ENCODE measurements at regions of chr5 and their contacts with region 1.

Region 1: GRCh38 chr5:131634996-131635754 is at the start of gene RAPGEF6:
- DNase-seq: peak; percentile 97
- H3K4me3 Mint-ChIP-seq: peak within 1 kb of the TSS; percentile 98
- H3K27ac Mint-ChIP-seq: peak within 1 kb of the TSS; percentile 97
- H3K4me1 Mint-ChIP-seq: peaks cover 33% of the 10 kb centered on the region
- H3K27me3 Mint-ChIP-seq: no peaks in the 10 kb centered on the region
- total RNA-seq, gene RAPGEF6: 36.7 and 42.8 TPM in 2 replicates

Region 2: DNA sequence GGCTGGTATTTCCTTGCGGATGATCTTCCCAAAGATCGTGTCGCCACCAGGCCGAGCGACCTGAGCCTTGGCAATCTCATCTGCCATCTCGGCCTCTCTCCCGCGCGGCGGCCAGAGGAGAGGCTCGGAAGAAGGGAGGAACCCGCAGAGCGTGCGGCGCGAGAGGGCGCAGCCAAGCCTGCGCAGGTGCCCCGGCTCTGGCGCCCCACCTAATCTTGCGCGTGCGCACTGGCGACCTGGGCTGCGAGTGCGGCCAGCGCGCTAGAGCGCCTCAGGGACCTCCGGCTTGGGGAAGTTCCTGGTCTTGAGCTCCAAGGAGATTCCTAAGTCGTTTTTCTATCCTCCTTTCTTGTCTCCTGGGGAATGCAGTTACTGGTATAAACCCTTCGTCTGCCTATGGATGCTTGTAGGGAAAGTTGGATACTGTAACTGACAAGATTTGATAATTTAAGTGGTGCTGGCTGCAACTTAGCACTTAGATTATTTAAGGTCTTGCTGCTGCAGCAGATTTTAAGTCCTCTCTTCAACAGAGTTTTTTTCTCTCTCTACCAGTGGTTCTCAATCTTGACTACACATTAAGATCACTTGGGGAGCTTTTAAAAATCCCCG is 470.0 kb before region 1 on chr5 and contains the start of gene HINT1:
- intact Hi-C with region 1: loop called (anchors 1 kb)
- DNase-seq: peak; percentile 93
- H3K4me3 Mint-ChIP-seq: peak within 1 kb of the TSS; percentile 99
- H3K27ac Mint-ChIP-seq: peak within 1 kb of the TSS; percentile 99
- H3K4me1 Mint-ChIP-seq: peaks cover 55% of the 10 kb centered on the region
- H3K27me3 Mint-ChIP-seq: peaks cover 2% of the 10 kb centered on the region
- total RNA-seq, gene HINT1: 249 and 262 TPM in 2 replicates

Region 3: DNA sequence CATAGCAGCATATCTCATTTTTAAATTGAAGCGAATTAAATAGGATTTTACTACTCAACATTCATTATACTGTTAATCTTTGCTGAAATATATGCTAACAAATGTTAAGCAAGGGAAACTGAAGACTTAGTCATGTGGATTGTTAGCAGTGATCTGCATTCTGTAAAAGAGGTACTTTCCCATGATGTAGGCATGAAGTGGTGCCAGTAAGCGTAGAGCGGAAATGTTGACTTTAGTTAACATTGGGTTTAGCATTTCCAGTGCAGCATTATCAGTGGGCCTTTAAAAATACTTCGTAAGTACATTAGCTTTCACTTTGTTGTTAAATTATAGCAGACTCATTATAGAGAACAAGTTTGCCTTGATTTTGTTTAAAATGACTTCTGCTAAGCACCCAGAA is 241.0 kb before region 1 on chr5:
- intact Hi-C with region 1: loop called (anchors 10 kb)
- DNase-seq: peak; percentile 56
- H3K4me3 Mint-ChIP-seq: peak overlapping the region; percentile 81
- H3K27ac Mint-ChIP-seq: peak overlapping the region; percentile 95
- H3K4me1 Mint-ChIP-seq: peaks cover 84% of the 10 kb centered on the region
- H3K27me3 Mint-ChIP-seq: no peaks in the 10 kb centered on the region

Region 4: GRCh38 chr5:131671994-131672655 is 37.0 kb after region 1 on chr5:
- intact Hi-C with region 1: loop called (anchors 2 kb)
- DNase-seq: no peak
- H3K4me3 Mint-ChIP-seq: no peak overlapping the region
- H3K27ac Mint-ChIP-seq: no peak overlapping the region
- H3K4me1 Mint-ChIP-seq: peaks cover 44% of the 10 kb centered on the region
- H3K27me3 Mint-ChIP-seq: no peaks in the 10 kb centered on the region

Region 5: GRCh38 chr5:132019857-132020555 is 384.8 kb after region 1 on chr5:
- intact Hi-C with region 1: loop called (anchors 2 kb)
- DNase-seq: peak; percentile 85
- H3K4me3 Mint-ChIP-seq: peak overlapping the region; percentile 50
- H3K27ac Mint-ChIP-seq: peak overlapping the region; percentile 92
- H3K4me1 Mint-ChIP-seq: peaks cover 51% of the 10 kb centered on the region
- H3K27me3 Mint-ChIP-seq: peaks cover 48% of the 10 kb centered on the region

Region 6: DNA sequence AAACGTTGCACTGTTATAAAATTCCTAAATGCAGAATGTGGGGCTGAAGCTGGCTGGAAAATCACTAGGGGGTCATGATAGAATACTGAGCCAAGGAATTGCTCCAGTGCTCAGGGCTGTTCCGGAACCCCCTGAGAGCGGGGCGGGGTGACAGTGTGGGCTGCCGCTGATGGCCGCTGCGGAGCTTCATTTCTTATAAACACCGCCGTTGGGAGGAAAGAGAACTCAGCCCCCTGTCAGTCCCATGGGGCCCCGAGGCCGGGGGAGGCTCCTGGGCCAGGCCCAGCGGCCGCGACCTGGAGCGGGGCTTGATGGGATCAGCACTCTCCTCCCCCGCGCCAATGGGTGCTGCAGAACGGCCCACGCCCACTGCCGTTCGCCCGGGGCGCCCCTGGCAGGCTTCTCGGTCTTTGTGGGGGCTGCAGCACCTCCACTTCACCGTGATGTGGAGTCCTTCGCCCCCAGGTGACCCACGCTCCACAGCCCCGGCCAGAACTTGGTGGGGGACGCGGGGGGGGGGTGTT is 860.6 kb after region 1 on chr5:
- intact Hi-C with region 1: loop called (anchors 1 kb)
- DNase-seq: peak; percentile 72
- H3K4me3 Mint-ChIP-seq: peak overlapping the region; percentile 93
- H3K27ac Mint-ChIP-seq: peak overlapping the region; percentile 90
- H3K4me1 Mint-ChIP-seq: peaks cover 80% of the 10 kb centered on the region
- H3K27me3 Mint-ChIP-seq: peaks cover 1% of the 10 kb centered on the region

Measured in activated T-helper 1 cell treated with anti-CD3 and anti-CD28 coated beads, Interleukin-12 subunit alpha, Interleukin-12 subunit beta, Interleukin-2, Interleukin-4 antibody, amounts not matched to agents 30 ng/mL and 10 ng/mL and 1 ng/mL, durations not matched to agents 14 hours and 24 hours and 36 hours (primary cell).